Activated B cell treated with CpG ODN at 0.5 μM for 24 hours (primary cell): ENCODE measurements at regions of chr4 and their contacts with region 1.

Region 1: GRCh38 chr4:87073199-87074120 is 138.6 kb downstream of the AFF1 start:
- DNase-seq: peak; percentile 35
- ATAC-seq: peak; percentile 84
- H3K4me3 Mint-ChIP-seq: peak overlapping the region; percentile 82
- H3K27ac Mint-ChIP-seq: peak overlapping the region; percentile 93
- H3K4me1 Mint-ChIP-seq: peaks cover 40% of the 10 kb centered on the region
- H3K27me3 Mint-ChIP-seq: no peaks in the 10 kb centered on the region
- CTCF ChIP-seq: no peak

Region 2: GRCh38 chr4:86999136-86999643 is 74.3 kb before region 1 on chr4:
- CTCF ChIA-PET with region 1: no interaction called
- POLR2A ChIA-PET with region 1: interaction called, 3 read pairs
- intact Hi-C with region 1: loop called (anchors 2 kb)
- DNase-seq: no peak
- ATAC-seq: no peak
- H3K4me3 Mint-ChIP-seq: peak overlapping the region; percentile 6
- H3K27ac Mint-ChIP-seq: peak overlapping the region; percentile 42
- H3K4me1 Mint-ChIP-seq: peaks cover 49% of the 10 kb centered on the region
- H3K27me3 Mint-ChIP-seq: no peaks in the 10 kb centered on the region
- CTCF ChIP-seq: no peak

Region 3: GRCh38 chr4:87026800-87027495 is 46.5 kb before region 1 on chr4:
- CTCF ChIA-PET with region 1: no interaction called
- POLR2A ChIA-PET with region 1: interaction called, 5 read pairs
- intact Hi-C with region 1: loop called (anchors 1 kb)
- DNase-seq: no peak
- ATAC-seq: peak; percentile 94
- H3K4me3 Mint-ChIP-seq: peak overlapping the region; percentile 56
- H3K27ac Mint-ChIP-seq: peak overlapping the region; percentile 89
- H3K4me1 Mint-ChIP-seq: peaks cover 65% of the 10 kb centered on the region
- H3K27me3 Mint-ChIP-seq: no peaks in the 10 kb centered on the region
- CTCF ChIP-seq: no peak

Region 4: GRCh38 chr4:87038837-87039615 is 34.4 kb before region 1 on chr4:
- CTCF ChIA-PET with region 1: no interaction called
- POLR2A ChIA-PET with region 1: interaction called, 3 read pairs
- intact Hi-C with region 1: loop called (anchors 2 kb)
- DNase-seq: no peak
- ATAC-seq: peak; percentile 83
- H3K4me3 Mint-ChIP-seq: peak overlapping the region; percentile 22
- H3K27ac Mint-ChIP-seq: peak overlapping the region; percentile 14
- H3K4me1 Mint-ChIP-seq: peaks cover 80% of the 10 kb centered on the region
- H3K27me3 Mint-ChIP-seq: no peaks in the 10 kb centered on the region
- CTCF ChIP-seq: no peak

Region 5: DNA sequence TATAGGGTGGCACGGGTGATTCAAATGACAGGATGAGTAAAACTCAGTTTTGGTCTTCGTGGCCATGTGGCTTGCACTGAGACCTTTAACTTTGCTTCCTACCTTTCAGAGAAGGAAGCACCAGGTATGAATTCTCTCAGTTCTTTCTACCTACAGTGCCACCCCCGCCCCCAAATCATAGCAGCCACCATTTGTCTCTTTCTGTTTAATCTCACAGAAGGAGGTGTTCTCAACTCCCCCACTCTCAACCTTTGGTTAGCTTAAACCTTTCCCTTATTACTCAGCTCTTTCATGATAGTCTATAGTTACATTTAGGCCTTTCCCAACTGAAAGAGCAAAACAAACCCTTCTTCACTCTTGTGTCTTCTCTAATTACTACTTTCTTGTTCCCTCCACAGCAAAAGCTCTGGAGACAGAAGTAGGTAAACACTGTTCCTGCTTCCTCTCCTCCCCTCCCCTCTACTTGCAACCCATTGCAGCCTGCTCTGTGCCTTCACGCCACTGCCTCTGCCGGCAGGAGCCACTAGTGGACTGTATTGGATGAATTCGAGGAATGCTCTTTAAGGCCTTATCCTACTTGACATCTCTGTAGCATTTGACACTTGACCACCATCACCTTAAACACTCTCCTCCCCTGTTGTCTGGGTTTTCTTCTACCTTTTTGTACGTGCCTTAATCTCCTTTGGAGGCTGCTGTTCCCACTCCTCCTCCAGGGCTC is 14.9 kb before region 1 on chr4:
- CTCF ChIA-PET with region 1: no interaction called
- POLR2A ChIA-PET with region 1: interaction called, 4 read pairs
- intact Hi-C with region 1: loop called (anchors 2 kb)
- DNase-seq: no peak
- ATAC-seq: peak; percentile 42
- H3K4me3 Mint-ChIP-seq: no peak overlapping the region
- H3K27ac Mint-ChIP-seq: peak overlapping the region; percentile 28
- H3K4me1 Mint-ChIP-seq: peaks cover 53% of the 10 kb centered on the region
- H3K27me3 Mint-ChIP-seq: no peaks in the 10 kb centered on the region
- CTCF ChIP-seq: no peak

Region 6: DNA sequence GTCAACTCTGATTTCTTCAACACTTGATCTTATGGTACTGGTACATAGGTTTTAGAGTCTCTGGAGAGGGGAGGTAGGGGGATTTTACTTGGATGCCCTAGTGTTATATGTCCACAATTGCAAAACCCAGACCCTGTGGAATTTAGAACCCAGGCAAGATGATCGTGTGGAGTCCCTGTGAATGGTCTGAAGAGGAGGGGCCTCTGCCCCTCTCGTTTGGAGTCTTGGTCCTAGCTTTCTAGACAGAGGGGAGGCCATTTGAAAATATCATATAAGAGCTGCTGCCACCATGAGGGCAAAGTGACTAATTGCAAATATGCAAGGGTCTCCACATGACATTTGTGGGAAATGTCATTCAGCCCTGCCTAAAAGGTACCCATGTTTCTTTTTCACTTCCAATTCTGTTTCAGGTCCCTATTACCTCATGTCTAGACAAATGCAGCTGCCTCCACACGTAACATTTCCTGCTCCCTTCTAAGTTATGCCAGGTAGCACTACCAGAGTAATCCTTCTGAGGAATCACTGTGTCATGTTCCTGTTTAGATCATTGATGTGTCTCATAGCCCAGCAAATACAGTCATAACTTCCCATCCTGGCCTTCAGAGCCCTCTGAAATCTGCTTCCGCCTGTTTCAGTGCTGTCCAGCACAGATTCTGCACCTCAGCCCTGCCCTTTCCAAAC is 20.1 kb after region 1 on chr4:
- CTCF ChIA-PET with region 1: interaction called, 11 read pairs
- POLR2A ChIA-PET with region 1: interaction called, 5 read pairs
- intact Hi-C with region 1: loop called (anchors 1 kb)
- DNase-seq: no peak
- ATAC-seq: peak; percentile 89
- H3K4me3 Mint-ChIP-seq: no peak overlapping the region
- H3K27ac Mint-ChIP-seq: peak overlapping the region; percentile 62
- H3K4me1 Mint-ChIP-seq: peaks cover 20% of the 10 kb centered on the region
- H3K27me3 Mint-ChIP-seq: no peaks in the 10 kb centered on the region
- CTCF ChIP-seq: peak; percentile 15